ENCODE measurements at regions of chr14 and their contacts with region 1.

Region 1: DNA sequence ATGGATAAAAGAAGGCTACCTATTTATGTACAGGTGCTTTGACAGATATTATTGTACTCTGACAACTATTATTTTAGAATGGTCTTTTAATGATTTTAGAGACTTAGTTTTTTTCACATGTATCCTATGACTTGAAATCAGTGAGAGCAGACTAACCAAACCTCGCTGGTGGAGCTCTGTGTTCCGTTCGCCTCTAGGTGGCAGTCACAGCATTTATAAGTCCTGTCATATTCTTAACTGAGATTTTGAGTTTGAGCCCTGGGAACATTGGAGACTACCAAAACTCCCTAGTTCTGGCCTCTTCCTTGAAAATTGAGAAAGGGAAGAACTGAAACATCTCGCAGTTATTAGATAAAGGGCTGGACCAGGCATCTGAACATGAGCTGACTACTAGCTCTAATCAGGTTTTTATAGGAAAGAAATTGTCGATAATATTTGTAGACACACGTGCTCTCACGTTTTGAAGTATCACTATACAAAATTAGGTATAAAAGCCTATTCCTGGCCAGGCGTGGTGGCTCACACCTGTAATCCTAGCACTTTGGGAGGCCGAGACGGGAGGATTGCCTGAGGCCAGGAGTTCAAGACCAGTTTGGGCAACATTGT is 48.3 kb downstream of the TTLL5 start:
- DNase-seq: peak; percentile 72
- ATAC-seq: peak; percentile 74
- H3K4me3 Mint-ChIP-seq: no peak overlapping the region
- H3K27ac Mint-ChIP-seq: peak overlapping the region; percentile 73; the same call in 1 of the 2 replicates
- H3K4me1 Mint-ChIP-seq: peaks cover 14% of the 10 kb centered on the region
- H3K27me3 Mint-ChIP-seq: no peaks in the 10 kb centered on the region
- CTCF ChIP-seq: peak; percentile 67

Region 2: DNA sequence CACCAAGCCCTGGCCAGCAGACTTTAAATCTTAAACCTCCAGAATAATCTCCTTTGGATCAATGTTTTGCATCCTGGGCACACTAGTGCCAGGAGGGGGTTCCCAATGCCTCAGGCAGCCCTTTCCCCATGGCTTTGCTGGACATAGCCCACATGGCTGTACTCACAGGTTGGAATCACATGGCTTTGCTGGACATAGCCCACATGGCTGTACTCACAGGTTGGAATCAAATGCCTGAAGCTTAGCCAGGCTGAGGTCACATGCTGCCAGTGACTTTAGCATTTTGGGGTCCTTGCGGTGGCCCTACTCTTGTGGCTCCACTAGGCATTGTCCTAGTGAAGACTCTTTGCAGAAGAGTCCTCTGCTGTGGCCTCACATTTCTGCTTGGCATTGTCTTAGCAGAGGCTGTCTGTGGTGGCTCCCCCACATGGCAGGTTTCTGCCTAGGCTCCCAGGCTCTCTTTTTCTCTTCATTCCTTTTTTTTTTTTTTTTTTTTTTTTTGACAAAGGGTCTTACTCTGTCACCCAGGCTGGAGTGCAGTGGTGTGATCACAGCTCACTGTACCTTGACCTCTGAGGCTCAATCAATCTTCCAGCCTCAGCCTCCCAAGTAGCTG is 117.9 kb before region 1 on chr14:
- CTCF ChIA-PET with region 1: no interaction called
- POLR2A ChIA-PET with region 1: no interaction called
- DNase-seq: no peak
- ATAC-seq: peak; percentile 69
- H3K4me3 Mint-ChIP-seq: no peak overlapping the region
- H3K27ac Mint-ChIP-seq: no peak overlapping the region
- H3K4me1 Mint-ChIP-seq: peaks cover 12% of the 10 kb centered on the region
- H3K27me3 Mint-ChIP-seq: no peaks in the 10 kb centered on the region; the same call in none of the 2 replicates
- CTCF ChIP-seq: no peak

Region 3: GRCh38 chr14:75660630-75661494 is 48.4 kb before region 1 on chr14 and contains the starts of genes ERG28 and TTLL5:
- CTCF ChIA-PET with region 1: interaction called, 13 read pairs
- POLR2A ChIA-PET with region 1: no interaction called
- DNase-seq: peak; percentile 97
- ATAC-seq: peak; percentile 96
- H3K4me3 Mint-ChIP-seq: peak within 1 kb of the TSS; percentile 92
- H3K27ac Mint-ChIP-seq: peak within 1 kb of the TSS; percentile 95
- H3K4me1 Mint-ChIP-seq: peaks cover 17% of the 10 kb centered on the region
- H3K27me3 Mint-ChIP-seq: no peaks in the 10 kb centered on the region
- CTCF ChIP-seq: no peak
- total RNA-seq, gene ERG28: 27.9 to 29.9 TPM (median 29.4 TPM) in 3 replicates
- total RNA-seq, gene TTLL5: 39.6 to 42.6 TPM (median 40.8 TPM) in 3 replicates

Region 4: GRCh38 chr14:75738192-75738591 is 28.9 kb after region 1 on chr14:
- CTCF ChIA-PET with region 1: interaction called, 11 read pairs
- POLR2A ChIA-PET with region 1: no interaction called
- DNase-seq: no peak
- ATAC-seq: no peak
- H3K4me3 Mint-ChIP-seq: no peak overlapping the region
- H3K27ac Mint-ChIP-seq: no peak overlapping the region
- H3K4me1 Mint-ChIP-seq: peaks cover 4% of the 10 kb centered on the region
- H3K27me3 Mint-ChIP-seq: no peaks in the 10 kb centered on the region
- CTCF ChIP-seq: no peak

Region 5: GRCh38 chr14:75794615-75795038 is 85.3 kb after region 1 on chr14:
- CTCF ChIA-PET with region 1: interaction called, 14 read pairs
- POLR2A ChIA-PET with region 1: no interaction called
- DNase-seq: no peak
- ATAC-seq: peak; percentile 69
- H3K4me3 Mint-ChIP-seq: no peak overlapping the region
- H3K27ac Mint-ChIP-seq: no peak overlapping the region
- H3K4me1 Mint-ChIP-seq: peaks cover 10% of the 10 kb centered on the region
- H3K27me3 Mint-ChIP-seq: no peaks in the 10 kb centered on the region
- CTCF ChIP-seq: no peak

Region 6: GRCh38 chr14:75879031-75879430 is 169.7 kb after region 1 on chr14:
- CTCF ChIA-PET with region 1: interaction called, 15 read pairs
- POLR2A ChIA-PET with region 1: no interaction called
- DNase-seq: no peak
- ATAC-seq: no peak
- H3K4me3 Mint-ChIP-seq: no peak overlapping the region
- H3K27ac Mint-ChIP-seq: no peak overlapping the region
- H3K4me1 Mint-ChIP-seq: peaks cover 18% of the 10 kb centered on the region
- H3K27me3 Mint-ChIP-seq: no peaks in the 10 kb centered on the region
- CTCF ChIP-seq: no peak

Region 7: GRCh38 chr14:75906676-75907280 is 197.5 kb after region 1 on chr14:
- CTCF ChIA-PET with region 1: interaction called, 19 read pairs
- POLR2A ChIA-PET with region 1: no interaction called
- DNase-seq: peak; percentile 67
- ATAC-seq: peak; percentile 26; the same call in 1 of the 2 replicates
- H3K4me3 Mint-ChIP-seq: no peak overlapping the region
- H3K27ac Mint-ChIP-seq: no peak overlapping the region
- H3K4me1 Mint-ChIP-seq: peaks cover 9% of the 10 kb centered on the region
- H3K27me3 Mint-ChIP-seq: no peaks in the 10 kb centered on the region
- CTCF ChIP-seq: peak; percentile 71

Measured in WTC11 (cell line).